MCF 10A (cell line): ENCODE measurements at regions of chr6 and their contacts with region 1.

Region 1: GRCh38 chr6:10478187-10479040 is 42.7 kb upstream of the GCNT2 start:
- DNase-seq: peak; percentile 65
- H3K4me3 Mint-ChIP-seq: no peak overlapping the region
- H3K27ac Mint-ChIP-seq: no peak overlapping the region
- H3K4me1 Mint-ChIP-seq: peaks cover 21% of the 10 kb centered on the region
- H3K27me3 Mint-ChIP-seq: no peaks in the 10 kb centered on the region
- CTCF ChIP-seq: peak; percentile 70

Region 2: GRCh38 chr6:10355115-10355702 is 123.2 kb before region 1 on chr6:
- CTCF ChIA-PET with region 1: no interaction called
- POLR2A ChIA-PET with region 1: no interaction called
- intact Hi-C with region 1: no loop called
- DNase-seq: peak; percentile 60
- H3K4me3 Mint-ChIP-seq: no peak overlapping the region
- H3K27ac Mint-ChIP-seq: peak overlapping the region; percentile 59
- H3K4me1 Mint-ChIP-seq: peaks cover 6% of the 10 kb centered on the region
- H3K27me3 Mint-ChIP-seq: no peaks in the 10 kb centered on the region
- CTCF ChIP-seq: no peak

Region 3: GRCh38 chr6:10465629-10466504 is 12.5 kb before region 1 on chr6:
- CTCF ChIA-PET with region 1: interaction called, 30 read pairs
- POLR2A ChIA-PET with region 1: no interaction called
- intact Hi-C with region 1: no loop called
- DNase-seq: peak; percentile 69
- H3K4me3 Mint-ChIP-seq: no peak overlapping the region
- H3K27ac Mint-ChIP-seq: no peak overlapping the region
- H3K4me1 Mint-ChIP-seq: peaks cover 13% of the 10 kb centered on the region
- H3K27me3 Mint-ChIP-seq: no peaks in the 10 kb centered on the region
- CTCF ChIP-seq: peak; percentile 73

Region 4: GRCh38 chr6:10510592-10511367 is 32.4 kb after region 1 on chr6:
- CTCF ChIA-PET with region 1: interaction called, 15 read pairs
- POLR2A ChIA-PET with region 1: no interaction called
- intact Hi-C with region 1: no loop called
- DNase-seq: peak; percentile 67
- H3K4me3 Mint-ChIP-seq: no peak overlapping the region
- H3K27ac Mint-ChIP-seq: no peak overlapping the region
- H3K4me1 Mint-ChIP-seq: peaks cover 6% of the 10 kb centered on the region
- H3K27me3 Mint-ChIP-seq: no peaks in the 10 kb centered on the region
- CTCF ChIP-seq: peak; percentile 71

Region 5: DNA sequence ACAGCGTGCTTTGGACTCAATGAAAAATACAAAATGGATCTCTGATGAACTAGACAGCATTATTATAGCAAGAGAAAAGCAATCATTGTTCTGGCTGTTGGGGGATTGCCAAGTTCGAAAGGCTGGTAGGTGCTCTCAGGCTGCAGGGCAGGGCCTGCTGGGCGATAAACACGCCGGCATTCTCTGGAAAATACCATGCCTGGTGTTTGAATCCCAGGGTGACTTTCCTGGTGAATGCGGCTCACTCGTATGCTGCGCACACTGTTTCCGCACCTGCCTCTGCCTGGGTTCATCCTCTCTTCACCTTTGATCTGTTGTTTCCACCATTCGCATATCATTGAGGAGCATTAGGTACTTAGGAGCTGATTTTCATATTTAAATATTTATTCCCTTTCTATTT is 80.2 kb after region 1 on chr6:
- CTCF ChIA-PET with region 1: no interaction called
- POLR2A ChIA-PET with region 1: no interaction called
- intact Hi-C with region 1: no loop called
- DNase-seq: no peak
- H3K4me3 Mint-ChIP-seq: no peak overlapping the region
- H3K27ac Mint-ChIP-seq: no peak overlapping the region
- H3K4me1 Mint-ChIP-seq: peaks cover 10% of the 10 kb centered on the region
- H3K27me3 Mint-ChIP-seq: no peaks in the 10 kb centered on the region
- CTCF ChIP-seq: no peak

Region 6: DNA sequence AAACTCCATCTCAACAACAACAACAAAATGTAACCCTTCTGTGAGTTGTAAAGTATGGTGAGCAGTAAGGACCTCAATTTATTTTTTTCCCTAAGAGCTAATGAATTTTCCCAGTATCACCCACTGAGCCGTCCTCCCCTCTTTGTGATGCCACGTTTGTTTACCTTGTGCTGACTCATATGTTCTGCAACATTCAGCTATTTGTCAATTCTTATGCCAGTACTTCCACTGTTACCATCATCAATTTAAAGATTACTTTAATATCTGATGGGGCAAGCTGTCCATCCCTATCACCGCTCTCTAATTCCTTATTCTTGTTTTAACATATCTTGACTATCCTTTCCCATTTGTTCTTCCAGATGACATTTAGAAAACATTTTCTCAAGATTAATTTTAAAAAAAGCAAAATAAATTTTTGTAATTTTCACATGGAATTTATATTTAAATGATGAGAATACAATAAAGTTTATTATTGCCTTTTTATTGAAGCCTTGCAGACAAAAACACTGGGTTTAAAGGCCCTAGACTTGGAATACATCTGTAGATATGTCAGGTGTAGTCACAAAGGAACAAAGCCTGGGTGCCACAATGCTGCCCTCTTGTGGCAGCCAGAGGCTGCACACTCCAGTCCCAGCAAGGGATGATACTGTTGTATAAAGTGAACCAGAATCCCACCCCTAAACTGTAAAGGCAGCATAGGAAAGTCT is 322.6 kb after region 1 on chr6:
- CTCF ChIA-PET with region 1: interaction called, 41 read pairs
- POLR2A ChIA-PET with region 1: interaction called, 5 read pairs
- intact Hi-C with region 1: loop called (anchors 1 kb)
- DNase-seq: peak; percentile 76
- H3K4me3 Mint-ChIP-seq: no peak overlapping the region
- H3K27ac Mint-ChIP-seq: peak overlapping the region; percentile 57
- H3K4me1 Mint-ChIP-seq: peaks cover 8% of the 10 kb centered on the region
- H3K27me3 Mint-ChIP-seq: no peaks in the 10 kb centered on the region
- CTCF ChIP-seq: peak; percentile 96